AG04449 (cell line): ENCODE measurements at regions of chr18 and their contacts with region 1.

Region 1: DNA sequence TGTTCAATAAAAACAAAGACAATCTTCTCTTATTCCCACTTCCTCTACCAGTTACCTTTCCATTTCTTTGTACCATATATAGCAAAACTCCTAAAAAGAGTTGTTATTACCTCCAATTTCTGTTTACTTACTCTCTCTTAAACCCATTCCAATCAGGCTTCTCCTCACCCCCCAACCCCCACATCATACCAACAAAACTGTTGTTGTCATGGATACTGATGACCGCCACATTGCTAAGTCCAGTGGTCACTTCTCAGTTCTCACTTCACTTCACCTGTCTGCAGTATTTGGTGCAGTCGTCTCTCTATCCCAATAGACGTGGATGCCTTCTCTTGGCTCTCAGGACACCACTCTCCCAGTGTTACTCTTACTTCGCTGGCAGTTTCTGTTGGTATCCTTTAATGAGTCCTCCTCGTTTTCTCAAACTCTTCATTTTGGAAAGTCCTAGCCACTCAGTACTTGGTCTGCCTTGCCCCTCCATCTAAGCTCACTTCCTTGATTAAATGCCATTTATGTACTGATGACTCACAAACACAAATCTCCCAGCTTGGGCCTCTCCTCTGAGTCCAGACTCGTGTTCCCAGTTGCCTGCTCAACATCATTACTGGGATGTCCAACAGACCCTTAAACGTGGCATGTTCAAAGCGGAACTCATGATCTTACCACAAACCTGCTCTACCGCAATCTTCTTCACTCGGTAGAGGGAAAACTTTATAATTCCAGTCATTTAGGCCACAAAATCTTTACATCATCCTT is 13.6 kb upstream of the CCDC68 start:
- DNase-seq: no peak
- H3K4me3 ChIP-seq: no peak overlapping the region
- CTCF ChIP-seq: no peak

Region 2: GRCh38 chr18:54679318-54680149 is 293.3 kb before region 1 on chr18:
- CTCF ChIA-PET with region 1: interaction called, 14 read pairs
- POLR2A ChIA-PET with region 1: no interaction called
- DNase-seq: peak; percentile 49
- H3K4me3 ChIP-seq: no peak overlapping the region
- CTCF ChIP-seq: peak; percentile 47